A549 (cell line): ENCODE measurements at regions of chr2 and their contacts with region 1.

Region 1: DNA sequence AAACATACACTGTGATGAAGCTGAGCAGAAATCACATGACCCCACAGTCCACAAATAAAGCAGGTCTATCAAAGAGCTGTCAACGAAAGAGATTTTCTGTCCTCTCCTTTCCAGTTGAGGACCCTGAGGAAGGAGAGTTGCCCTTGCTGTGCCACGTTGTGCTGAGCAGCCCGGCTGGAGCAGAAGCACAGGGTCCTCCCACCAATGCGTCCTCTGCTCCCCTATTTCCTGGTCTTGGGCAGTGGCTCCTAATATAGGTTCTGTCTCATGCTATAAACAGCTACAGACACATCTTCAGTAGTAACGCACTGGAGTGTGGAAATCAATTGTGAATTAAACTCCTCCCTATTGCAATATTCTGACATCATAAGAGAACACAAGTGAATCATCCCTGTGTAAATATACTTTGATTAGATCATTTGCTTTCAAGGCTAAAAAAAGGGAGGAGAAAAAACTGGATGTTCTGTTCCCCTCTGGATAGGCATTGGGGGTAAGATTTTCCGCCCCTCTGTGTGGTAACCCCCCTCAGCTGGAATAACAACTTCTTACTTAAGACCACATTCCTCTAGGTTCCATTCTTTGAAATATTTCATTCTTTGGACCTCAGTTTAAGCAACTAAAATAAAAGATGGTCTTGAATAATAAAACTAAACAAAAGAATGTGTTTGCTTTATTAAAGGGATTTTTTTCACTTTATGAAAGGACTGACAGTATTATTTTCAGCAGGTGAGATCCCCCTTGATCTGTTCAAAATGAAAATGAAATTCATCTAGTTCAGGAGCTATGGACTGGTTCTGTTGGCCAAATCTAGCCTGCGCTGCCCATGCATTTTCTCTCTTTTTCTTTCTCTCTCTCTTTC is 8.3 kb upstream of the RHOB start:
- DNase-seq: peak; percentile 78 to 91
- ATAC-seq: peak; percentile 80 to 86
- H3K4me3 ChIP-seq: peak overlapping the region; percentile 35
- H3K27ac ChIP-seq: peak overlapping the region; percentile 79 to 87
- H3K4me1 ChIP-seq: peaks cover 38% of the 10 kb centered on the region
- CTCF ChIP-seq: no peak
- EP300 ChIP-seq: peak; percentile 76 to 88; a peak in 2 of 5 replicates
- POLR2A ChIP-seq: no peak
- RAD21 ChIP-seq: no peak

Region 2: GRCh38 chr2:20398956-20399567 is 39.5 kb before region 1 on chr2:
- CTCF ChIA-PET with region 1: interaction called, 59 read pairs
- POLR2A ChIA-PET with region 1: no interaction called
- DNase-seq: no peak
- ATAC-seq: no peak
- H3K4me3 ChIP-seq: no peak overlapping the region
- H3K27ac ChIP-seq: no peak overlapping the region
- H3K4me1 ChIP-seq: no peaks in the 10 kb centered on the region
- CTCF ChIP-seq: no peak
- EP300 ChIP-seq: no peak
- POLR2A ChIP-seq: no peak
- RAD21 ChIP-seq: no peak

Region 3: DNA sequence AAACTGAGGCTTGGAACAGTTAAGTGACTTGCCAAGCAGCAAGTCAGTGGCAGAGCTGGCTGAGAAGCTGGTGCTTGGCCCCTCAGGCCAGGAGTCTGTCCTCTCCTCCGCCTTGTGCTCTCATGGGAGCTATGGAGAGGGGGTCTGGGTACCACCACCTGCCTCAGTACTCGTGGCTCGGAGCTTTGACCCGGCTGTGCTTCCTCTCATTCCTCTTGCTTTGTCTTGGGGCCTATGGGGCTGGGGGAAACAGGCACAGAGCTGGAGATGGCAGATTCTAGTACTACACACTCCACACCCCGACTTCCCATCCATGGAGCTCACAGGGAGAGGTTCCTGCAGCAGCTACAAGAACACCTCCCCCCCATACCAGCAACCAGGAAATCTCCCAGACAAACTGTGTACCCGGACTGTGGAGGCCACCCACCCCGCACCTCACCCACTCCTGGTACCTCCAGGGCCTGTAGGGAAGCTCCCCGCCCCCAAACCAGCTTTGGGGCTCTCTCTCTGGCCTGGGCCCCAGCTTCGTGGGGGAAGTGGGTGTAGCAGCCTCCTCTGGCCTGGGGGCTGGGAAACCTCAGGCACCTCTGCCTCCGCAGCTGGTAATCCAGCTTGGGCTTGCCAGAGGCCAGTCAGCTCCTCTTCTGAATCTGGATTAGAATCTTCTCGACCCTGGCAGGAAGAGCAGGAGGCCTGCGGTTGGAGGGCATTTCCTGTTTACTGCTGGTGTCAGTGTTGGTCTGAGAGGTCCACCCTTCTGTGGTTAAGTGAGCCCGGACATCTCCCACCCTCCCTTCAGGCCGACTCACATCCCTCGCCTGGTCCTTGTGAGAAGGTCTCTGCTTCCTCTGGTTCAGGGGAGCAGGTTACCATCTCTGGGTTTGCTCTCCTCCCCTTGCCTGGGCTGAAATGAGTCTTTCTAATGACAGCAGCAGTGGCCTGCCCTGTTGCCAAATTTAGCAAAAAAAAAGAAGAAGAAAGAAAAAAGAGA is 14.0 kb before region 1 on chr2:
- CTCF ChIA-PET with region 1: interaction called, 87 read pairs
- POLR2A ChIA-PET with region 1: no interaction called
- DNase-seq: no peak
- ATAC-seq: 0 out of 6 replicates have a peak, but pooled peaks of 1 of the 2 experiments have one; percentile 10
- H3K4me3 ChIP-seq: no peak overlapping the region
- H3K27ac ChIP-seq: peak overlapping the region in 1 of 2 experiments; percentile 3; a peak in 1 of 6 replicates
- H3K4me1 ChIP-seq: 0 out of 3 replicates have a peak, but pooled peaks cover 2% of the 10 kb centered on the region
- CTCF ChIP-seq: no peak
- EP300 ChIP-seq: no peak
- POLR2A ChIP-seq: no peak
- RAD21 ChIP-seq: no peak

Region 4: DNA sequence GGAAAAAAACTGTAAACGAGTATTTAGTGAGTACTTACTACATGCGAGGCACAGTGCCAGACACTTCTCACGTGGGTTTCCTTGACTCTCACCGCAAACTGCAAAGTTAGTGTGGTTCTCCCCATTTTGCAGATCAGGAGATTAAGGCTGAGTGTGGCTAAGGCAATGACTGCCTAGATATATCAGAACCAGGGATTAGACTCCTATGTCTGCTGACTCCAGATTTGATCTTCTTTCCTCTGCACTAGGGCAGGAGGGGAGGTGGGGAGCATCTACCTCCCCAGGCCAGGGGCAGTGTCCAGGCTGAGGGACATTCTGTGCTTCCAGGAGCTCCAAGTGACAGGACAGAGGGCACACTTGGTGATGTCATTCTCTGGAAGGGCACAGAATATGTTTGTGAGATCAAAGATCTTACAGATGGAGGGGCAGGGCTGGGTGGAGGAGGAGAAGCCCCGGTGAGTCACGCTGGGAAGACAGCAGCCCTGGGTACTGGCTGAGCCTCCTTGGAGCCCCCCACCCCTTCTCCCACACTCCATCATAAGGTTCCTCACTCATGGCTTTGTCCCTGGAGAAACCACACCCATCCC is 100.7 kb after region 1 on chr2:
- CTCF ChIA-PET with region 1: no interaction called
- POLR2A ChIA-PET with region 1: no interaction called
- DNase-seq: no peak
- ATAC-seq: peak in 1 of 2 experiments; percentile 8; a peak in 2 of 6 replicates
- H3K4me3 ChIP-seq: no peak overlapping the region
- H3K27ac ChIP-seq: peak overlapping the region; percentile 51 to 72; a peak in 4 of 6 replicates
- H3K4me1 ChIP-seq: peaks cover 28% of the 10 kb centered on the region
- CTCF ChIP-seq: no peak
- EP300 ChIP-seq: no peak
- POLR2A ChIP-seq: no peak
- RAD21 ChIP-seq: no peak